Activated B cell treated with CpG ODN at 0.5 μM for 24 hours (primary cell): ENCODE measurements at regions of chr16 and their contacts with region 1.

Region 1: DNA sequence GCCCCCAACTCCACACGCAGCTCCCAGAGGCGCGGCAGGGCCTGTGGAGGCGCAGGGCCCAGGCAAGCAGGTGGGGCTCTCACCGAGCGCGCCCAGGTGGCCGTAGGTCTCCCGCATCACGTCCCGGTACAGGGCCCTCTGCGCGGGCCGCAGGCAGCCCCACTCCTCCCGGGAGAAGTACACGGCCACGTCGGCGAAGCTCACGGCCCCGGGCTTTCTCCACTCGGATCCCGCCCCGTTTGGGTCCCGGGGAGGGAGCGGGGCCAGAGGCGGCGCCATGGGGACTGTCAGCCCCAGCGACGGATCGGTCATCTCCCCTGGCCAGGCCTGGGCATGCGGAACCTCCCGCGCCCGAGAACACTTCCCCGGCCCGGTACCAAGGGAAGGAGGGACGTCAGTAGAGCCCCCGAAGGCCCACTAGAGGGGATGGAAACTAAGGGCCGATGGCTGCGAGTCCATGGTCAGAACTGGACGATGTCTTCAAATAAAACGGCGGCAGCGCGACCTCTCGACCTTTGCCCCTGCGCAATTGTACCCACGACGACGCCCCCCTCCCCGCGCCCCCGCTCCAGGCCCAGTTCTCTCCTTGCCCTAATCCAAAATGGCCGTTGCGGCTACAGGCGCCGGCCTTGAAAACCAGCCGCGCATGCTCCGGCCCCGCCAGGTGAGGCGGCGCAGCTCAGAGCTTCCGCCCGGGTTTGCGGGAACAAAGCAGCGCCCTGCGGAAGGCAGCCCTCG is at the start of gene ZNF747:
- DNase-seq: peak; percentile 85
- ATAC-seq: peak; percentile 83
- H3K4me3 Mint-ChIP-seq: peak within 1 kb of the TSS; percentile 96
- H3K27ac Mint-ChIP-seq: peak within 1 kb of the TSS; percentile 97
- H3K4me1 Mint-ChIP-seq: peaks cover 23% of the 10 kb centered on the region
- H3K27me3 Mint-ChIP-seq: no peaks in the 10 kb centered on the region
- CTCF ChIP-seq: no peak
- total RNA-seq, gene ZNF747: 16.3 and 21.6 TPM in 2 replicates

Region 2: GRCh38 chr16:30407102-30407803 is 127.3 kb before region 1 on chr16 and contains the start of gene ZNF771:
- CTCF ChIA-PET with region 1: interaction called, 6 read pairs
- POLR2A ChIA-PET with region 1: interaction called, 11 read pairs
- intact Hi-C with region 1: no loop called
- DNase-seq: peak; percentile 90
- ATAC-seq: peak; percentile 89
- H3K4me3 Mint-ChIP-seq: peak within 1 kb of the TSS; percentile 89
- H3K27ac Mint-ChIP-seq: peak within 1 kb of the TSS; percentile 90
- H3K4me1 Mint-ChIP-seq: peaks cover 27% of the 10 kb centered on the region
- H3K27me3 Mint-ChIP-seq: no peaks in the 10 kb centered on the region
- CTCF ChIP-seq: no peak
- total RNA-seq, gene ZNF771: 4.4 and 5.2 TPM in 2 replicates

Region 3: DNA sequence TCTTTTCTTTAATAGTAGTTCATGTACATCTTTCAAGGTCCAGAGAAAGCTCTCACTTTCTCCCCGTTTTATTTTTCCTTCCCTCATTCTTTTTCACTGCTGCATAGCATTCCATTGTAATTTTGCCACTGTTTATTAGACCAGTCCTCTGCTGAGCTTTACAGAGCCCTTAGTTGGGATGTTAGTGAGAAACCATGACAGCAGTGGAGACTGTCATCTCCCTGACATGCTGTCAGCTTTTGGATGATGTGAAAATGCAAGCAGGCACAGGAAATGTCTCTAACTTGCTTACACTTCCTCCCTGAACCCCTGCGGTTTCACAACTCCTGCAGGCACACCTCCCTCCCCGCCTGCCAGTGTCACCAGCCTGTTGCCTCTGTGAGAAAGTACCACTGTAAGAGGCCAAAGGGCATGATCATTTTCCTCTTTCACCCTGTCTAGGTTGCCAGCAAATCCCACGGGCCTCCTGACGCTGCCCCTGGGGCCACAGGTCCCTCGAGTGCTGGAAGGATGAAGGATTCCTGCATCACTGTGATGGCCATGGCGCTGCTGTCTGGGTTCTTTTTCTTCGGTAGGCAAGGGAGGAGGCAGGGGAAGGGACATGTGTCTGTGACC is 62.1 kb before region 1 on chr16 and contains the start of gene ITGAL:
- CTCF ChIA-PET with region 1: interaction called, 11 read pairs
- POLR2A ChIA-PET with region 1: interaction called, 54 read pairs
- intact Hi-C with region 1: loop called (anchors 2 kb)
- DNase-seq: peak; percentile 59
- ATAC-seq: peak; percentile 65
- H3K4me3 Mint-ChIP-seq: peak within 1 kb of the TSS; percentile 89
- H3K27ac Mint-ChIP-seq: peak within 1 kb of the TSS; percentile 94
- H3K4me1 Mint-ChIP-seq: peaks cover 60% of the 10 kb centered on the region
- H3K27me3 Mint-ChIP-seq: no peaks in the 10 kb centered on the region
- CTCF ChIP-seq: no peak
- total RNA-seq, gene ITGAL: 216 and 240 TPM in 2 replicates

Region 4: DNA sequence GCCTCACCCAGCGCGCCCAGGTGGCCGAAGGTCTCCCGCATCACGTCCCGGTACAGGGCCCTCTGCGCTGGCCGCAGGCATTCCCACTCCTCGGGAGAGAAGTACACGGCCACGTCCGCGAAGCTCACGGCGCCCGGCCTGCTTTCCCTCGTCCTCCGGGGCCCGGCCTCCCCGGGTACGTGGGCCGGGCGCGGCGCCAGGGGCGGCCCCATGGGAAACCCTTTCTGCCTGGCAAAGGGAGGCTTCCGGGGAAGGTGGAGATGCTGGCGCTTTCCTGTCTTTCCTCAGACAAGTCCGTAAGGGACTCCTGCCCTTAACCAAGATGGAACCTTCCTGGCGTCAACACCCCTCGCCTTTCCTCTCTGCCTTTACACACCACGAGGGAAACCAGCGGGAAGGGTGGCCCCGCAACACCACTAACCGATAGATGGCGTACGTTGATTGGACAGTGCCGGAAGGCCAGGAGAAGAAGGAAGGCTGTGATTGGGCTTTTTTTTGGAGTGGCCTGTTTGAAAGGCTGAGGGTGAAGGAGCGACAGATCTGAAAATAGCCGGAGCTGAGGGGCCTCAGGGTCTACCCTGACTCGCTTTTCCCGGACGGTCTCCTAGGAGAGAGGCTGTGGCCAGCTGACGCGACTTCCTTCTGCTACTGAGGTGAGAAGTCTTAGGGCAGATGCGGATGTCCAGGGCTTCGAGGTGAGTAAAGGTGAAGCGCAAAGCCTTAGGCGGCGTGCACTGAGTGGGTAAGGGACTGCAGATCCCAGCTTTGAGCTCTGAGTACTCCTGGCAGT is 51.1 kb after region 1 on chr16 and contains the start of gene ZNF785:
- CTCF ChIA-PET with region 1: interaction called, 3 read pairs
- POLR2A ChIA-PET with region 1: interaction called, 22 read pairs
- intact Hi-C with region 1: loop called (anchors 1 kb)
- DNase-seq: peak; percentile 76
- ATAC-seq: peak; percentile 99
- H3K4me3 Mint-ChIP-seq: peak within 1 kb of the TSS; percentile 85
- H3K27ac Mint-ChIP-seq: peak within 1 kb of the TSS; percentile 79
- H3K4me1 Mint-ChIP-seq: peaks cover 19% of the 10 kb centered on the region
- H3K27me3 Mint-ChIP-seq: no peaks in the 10 kb centered on the region
- CTCF ChIP-seq: no peak
- total RNA-seq, gene ZNF785: 20.0 and 22.8 TPM in 2 replicates

Region 5: DNA sequence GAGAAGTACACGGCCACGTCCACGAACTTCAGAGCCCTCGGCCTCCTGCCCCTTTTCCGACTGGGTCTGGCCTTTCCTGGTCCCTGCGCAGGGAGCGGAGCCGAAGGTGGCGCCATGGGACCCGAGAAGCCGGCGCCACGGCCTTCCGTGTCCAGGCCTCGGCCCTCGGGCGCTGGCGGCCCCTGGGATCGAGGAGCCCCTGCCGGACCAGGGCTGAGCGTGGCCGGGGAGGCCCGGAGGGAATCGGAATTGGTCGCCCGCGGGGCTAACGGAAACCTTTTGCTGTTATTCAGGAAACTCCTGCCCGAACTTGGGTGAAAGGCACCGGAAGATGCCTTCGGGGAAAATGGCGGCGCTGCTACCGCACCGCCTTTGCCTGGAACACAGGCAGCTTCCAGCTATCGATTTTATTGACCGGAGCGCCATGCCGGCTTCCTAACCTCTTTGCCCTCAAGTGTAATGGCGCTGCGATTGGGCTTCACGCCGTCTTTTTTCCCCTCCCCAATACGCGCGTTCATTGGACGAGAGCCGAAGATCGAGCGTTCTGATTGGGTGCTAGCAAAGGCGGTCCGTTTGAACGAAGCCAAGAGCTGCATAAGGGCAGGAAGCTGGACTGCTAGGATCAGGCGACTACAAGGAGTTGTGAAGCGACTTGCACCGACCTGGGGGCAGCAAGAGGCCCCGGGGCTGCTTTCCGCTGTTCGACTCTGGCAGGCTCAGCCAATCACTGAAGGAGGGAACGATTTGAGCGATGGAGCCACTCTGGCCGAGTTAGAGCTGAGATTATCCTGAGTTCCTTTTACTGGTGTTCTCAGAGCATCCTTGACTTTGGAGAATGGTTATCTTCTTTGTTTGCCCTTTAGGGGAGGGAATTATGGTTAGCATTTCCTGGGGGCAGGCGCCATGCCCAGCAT is 75.6 kb after region 1 on chr16 and contains the start of gene ZNF689:
- CTCF ChIA-PET with region 1: no interaction called
- POLR2A ChIA-PET with region 1: interaction called, 15 read pairs
- intact Hi-C with region 1: loop called (anchors 1 kb)
- DNase-seq: peak; percentile 90
- ATAC-seq: peak; percentile 87
- H3K4me3 Mint-ChIP-seq: peak within 1 kb of the TSS; percentile 93
- H3K27ac Mint-ChIP-seq: peak within 1 kb of the TSS; percentile 95
- H3K4me1 Mint-ChIP-seq: peaks cover 19% of the 10 kb centered on the region
- H3K27me3 Mint-ChIP-seq: no peaks in the 10 kb centered on the region
- CTCF ChIP-seq: no peak
- total RNA-seq, gene ZNF689: 10.1 and 11.6 TPM in 2 replicates